ENCODE measurements at regions of chr3 and their contacts with region 1.

Region 1: DNA sequence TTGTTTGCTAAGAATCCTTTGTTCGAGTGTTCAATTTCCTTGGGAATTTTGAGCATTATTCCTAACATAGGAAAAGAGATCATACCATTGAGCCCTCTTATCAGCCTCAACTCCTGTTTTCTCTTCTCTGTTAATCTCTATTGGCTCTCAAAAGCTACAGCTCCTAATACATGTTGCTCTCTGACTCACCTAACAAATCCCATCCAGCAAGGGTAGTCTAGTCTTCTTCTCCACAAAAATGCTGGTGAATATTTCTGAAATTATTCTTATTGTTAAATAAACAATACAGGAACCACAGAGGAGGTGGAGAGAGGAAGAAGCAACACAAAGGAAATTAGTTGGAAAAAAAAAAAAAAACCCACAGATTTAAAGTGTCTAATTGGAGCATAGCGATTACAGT is 325.8 kb upstream of the NAALADL2 start:
- DNase-seq: no peak
- H3K4me3 ChIP-seq: no peak overlapping the region
- H3K27ac ChIP-seq: no peak overlapping the region
- H3K4me1 ChIP-seq: no peaks in the 10 kb centered on the region
- H3K27me3 ChIP-seq: no peaks in the 10 kb centered on the region
- CTCF ChIP-seq: no peak
- POLR2A ChIP-seq: no peak

Region 2: DNA sequence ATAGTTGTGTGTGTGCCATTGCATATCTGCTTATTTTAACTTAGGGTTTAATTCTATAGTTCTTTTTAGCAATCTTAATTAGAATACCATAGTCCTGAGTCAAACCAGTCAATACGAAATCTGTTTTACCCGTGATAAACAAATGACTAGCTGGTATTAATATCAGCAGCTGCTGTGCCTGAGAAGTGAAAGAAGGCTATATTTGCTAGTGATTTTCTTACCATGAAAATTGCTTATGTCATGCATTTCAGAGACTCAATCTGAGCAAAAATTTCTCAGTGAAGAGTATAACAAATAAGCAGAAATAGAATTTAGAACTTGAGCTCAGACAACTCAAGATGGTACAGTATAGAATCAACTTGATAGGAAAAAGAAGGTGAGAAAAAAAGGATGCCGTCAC is 1146.3 kb after region 1 on chr3:
- intact Hi-C with region 1: loop called (anchors 5 kb)
- DNase-seq: no peak
- H3K4me3 ChIP-seq: no peak overlapping the region
- H3K27ac ChIP-seq: no peak overlapping the region
- H3K4me1 ChIP-seq: no peaks in the 10 kb centered on the region
- H3K27me3 ChIP-seq: no peaks in the 10 kb centered on the region
- CTCF ChIP-seq: no peak
- POLR2A ChIP-seq: no peak

Measured in breast epithelium (tissue), 4 donors.